ENCODE measurements at regions of chr11 and their contacts with region 1.

Region 1: DNA sequence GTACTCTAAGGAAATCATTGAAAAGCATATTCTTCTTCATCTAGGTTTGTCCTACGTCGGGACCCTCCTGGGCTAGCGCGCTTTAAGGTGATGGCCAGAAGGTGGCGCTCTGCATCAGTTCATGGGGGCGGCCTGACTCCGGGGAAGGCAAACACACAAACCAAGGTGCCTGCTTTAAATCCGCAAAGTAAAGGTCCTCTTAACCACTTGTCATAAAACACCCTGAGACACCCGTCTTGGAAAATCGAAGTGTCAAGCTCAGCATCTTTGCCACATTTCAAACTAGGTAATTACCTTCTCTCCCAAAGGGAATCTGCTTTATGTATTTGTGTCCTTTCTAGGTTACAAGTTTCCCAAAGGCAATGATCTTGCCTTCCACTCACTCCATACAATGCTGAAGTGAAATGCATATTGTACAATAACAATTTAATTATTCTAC is 33.9 kb downstream of the LMO2 start:
- DNase-seq: peak; percentile 86
- ATAC-seq: peak; percentile 90
- H3K4me3 Mint-ChIP-seq: no peak overlapping the region
- H3K27ac Mint-ChIP-seq: no peak overlapping the region
- H3K4me1 Mint-ChIP-seq: no peaks in the 10 kb centered on the region
- H3K27me3 Mint-ChIP-seq: peaks cover 34% of the 10 kb centered on the region
- CTCF ChIP-seq: peak; percentile 86

Region 2: GRCh38 chr11:33617665-33618350 is 240.1 kb before region 1 on chr11:
- CTCF ChIA-PET with region 1: no interaction called
- POLR2A ChIA-PET with region 1: no interaction called
- intact Hi-C with region 1: no loop called
- DNase-seq: no peak
- ATAC-seq: no peak
- H3K4me3 Mint-ChIP-seq: no peak overlapping the region
- H3K27ac Mint-ChIP-seq: no peak overlapping the region
- H3K4me1 Mint-ChIP-seq: no peaks in the 10 kb centered on the region
- H3K27me3 Mint-ChIP-seq: peaks cover 13% of the 10 kb centered on the region
- CTCF ChIP-seq: no peak

Region 3: GRCh38 chr11:33790040-33790439 is 67.9 kb before region 1 on chr11:
- CTCF ChIA-PET with region 1: no interaction called
- POLR2A ChIA-PET with region 1: no interaction called
- intact Hi-C with region 1: no loop called
- DNase-seq: no peak
- ATAC-seq: no peak
- H3K4me3 Mint-ChIP-seq: no peak overlapping the region
- H3K27ac Mint-ChIP-seq: no peak overlapping the region
- H3K4me1 Mint-ChIP-seq: peaks cover 3% of the 10 kb centered on the region
- H3K27me3 Mint-ChIP-seq: peaks cover 38% of the 10 kb centered on the region
- CTCF ChIP-seq: no peak

Region 4: GRCh38 chr11:33842236-33842915 is 15.6 kb before region 1 on chr11:
- CTCF ChIA-PET with region 1: interaction called, 13 read pairs
- POLR2A ChIA-PET with region 1: no interaction called
- intact Hi-C with region 1: no loop called
- DNase-seq: no peak
- ATAC-seq: no peak
- H3K4me3 Mint-ChIP-seq: no peak overlapping the region
- H3K27ac Mint-ChIP-seq: no peak overlapping the region
- H3K4me1 Mint-ChIP-seq: no peaks in the 10 kb centered on the region
- H3K27me3 Mint-ChIP-seq: peaks cover 20% of the 10 kb centered on the region
- CTCF ChIP-seq: no peak

Region 5: GRCh38 chr11:33869481-33870422 is 11.8 kb after region 1 on chr11:
- CTCF ChIA-PET with region 1: interaction called, 29 read pairs
- POLR2A ChIA-PET with region 1: interaction called, 3 read pairs
- intact Hi-C with region 1: no loop called
- DNase-seq: peak; percentile 23
- ATAC-seq: peak; percentile 72
- H3K4me3 Mint-ChIP-seq: peak overlapping the region; percentile 71
- H3K27ac Mint-ChIP-seq: no peak overlapping the region
- H3K4me1 Mint-ChIP-seq: peaks cover 13% of the 10 kb centered on the region
- H3K27me3 Mint-ChIP-seq: peaks cover 62% of the 10 kb centered on the region
- CTCF ChIP-seq: no peak

Measured in activated CD8-positive, alpha-beta T cell treated with anti-CD3 and anti-CD28 coated beads for 36 hours (primary cell).